GM18951 (cell line): ENCODE measurements at regions of chr13 and their contacts with region 1.

Region 1: GRCh38 chr13:75687150-75687763 is 51.1 kb downstream of the LMO7 start:
- POLR2A ChIP-seq: no peak

Region 2: GRCh38 chr13:75870397-75870903 is 183.2 kb after region 1 on chr13:
- in situ Hi-C with region 1: loop called (anchors 25 kb)
- POLR2A ChIP-seq: no peak

Region 3: GRCh38 chr13:76016799-76017400 is 329.6 kb after region 1 on chr13:
- in situ Hi-C with region 1: loop called (anchors 25 kb)
- POLR2A ChIP-seq: no peak

Region 4: GRCh38 chr13:76473552-76474134 is 786.4 kb after region 1 on chr13:
- in situ Hi-C with region 1: loop called (anchors 25 kb)
- POLR2A ChIP-seq: no peak

Region 5: DNA sequence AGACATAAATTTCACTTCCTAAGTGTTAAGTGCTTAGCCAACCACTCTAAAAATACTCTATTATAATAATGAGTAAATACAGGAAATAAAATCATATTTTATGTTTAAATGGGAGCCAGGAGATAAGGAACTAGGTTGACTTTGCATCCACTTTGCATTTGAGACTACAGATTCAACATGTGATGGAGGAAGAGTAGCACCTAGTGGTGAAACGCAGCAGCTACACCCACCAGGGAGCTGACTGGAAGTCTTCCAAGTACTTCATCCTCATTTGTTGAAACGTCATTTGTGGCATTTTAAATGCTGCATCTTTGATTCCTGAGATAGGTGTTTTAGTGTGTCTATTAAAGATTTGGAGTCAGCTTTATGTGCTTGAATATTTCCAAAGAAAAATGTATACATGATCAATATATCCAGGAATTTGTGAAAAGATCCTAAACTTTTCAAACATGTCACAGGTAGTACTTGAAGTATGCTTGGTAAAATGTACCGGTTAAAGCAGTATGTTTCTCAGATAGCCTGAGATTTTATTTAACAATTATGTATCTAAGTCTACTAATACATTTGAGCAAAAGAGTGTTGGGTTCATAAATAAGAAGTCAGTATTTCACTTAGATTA is 1216.4 kb after region 1 on chr13:
- in situ Hi-C with region 1: loop called (anchors 25 kb)
- POLR2A ChIP-seq: no peak